ENCODE measurements at regions of chr14 and their contacts with region 1.

Region 1: GRCh38 chr14:21103710-21104447 is 3.0 kb downstream of the TMEM253 start:
- DNase-seq: peak; percentile 98
- ATAC-seq: peak; percentile 88
- H3K4me3 Mint-ChIP-seq: peak overlapping the region; percentile 80
- H3K27ac Mint-ChIP-seq: peak overlapping the region; percentile 90
- H3K4me1 Mint-ChIP-seq: peaks cover 36% of the 10 kb centered on the region
- H3K27me3 Mint-ChIP-seq: no peaks in the 10 kb centered on the region
- CTCF ChIP-seq: peak; percentile 64

Region 2: GRCh38 chr14:21039585-21040369 is 64.1 kb before region 1 on chr14:
- CTCF ChIA-PET with region 1: interaction called, 11 read pairs
- POLR2A ChIA-PET with region 1: interaction called, 3 read pairs
- intact Hi-C with region 1: no loop called
- DNase-seq: peak; percentile 26
- ATAC-seq: peak; percentile 86
- H3K4me3 Mint-ChIP-seq: no peak overlapping the region
- H3K27ac Mint-ChIP-seq: no peak overlapping the region
- H3K4me1 Mint-ChIP-seq: peaks cover 4% of the 10 kb centered on the region
- H3K27me3 Mint-ChIP-seq: peaks cover 3% of the 10 kb centered on the region
- CTCF ChIP-seq: peak; percentile 50

Region 3: DNA sequence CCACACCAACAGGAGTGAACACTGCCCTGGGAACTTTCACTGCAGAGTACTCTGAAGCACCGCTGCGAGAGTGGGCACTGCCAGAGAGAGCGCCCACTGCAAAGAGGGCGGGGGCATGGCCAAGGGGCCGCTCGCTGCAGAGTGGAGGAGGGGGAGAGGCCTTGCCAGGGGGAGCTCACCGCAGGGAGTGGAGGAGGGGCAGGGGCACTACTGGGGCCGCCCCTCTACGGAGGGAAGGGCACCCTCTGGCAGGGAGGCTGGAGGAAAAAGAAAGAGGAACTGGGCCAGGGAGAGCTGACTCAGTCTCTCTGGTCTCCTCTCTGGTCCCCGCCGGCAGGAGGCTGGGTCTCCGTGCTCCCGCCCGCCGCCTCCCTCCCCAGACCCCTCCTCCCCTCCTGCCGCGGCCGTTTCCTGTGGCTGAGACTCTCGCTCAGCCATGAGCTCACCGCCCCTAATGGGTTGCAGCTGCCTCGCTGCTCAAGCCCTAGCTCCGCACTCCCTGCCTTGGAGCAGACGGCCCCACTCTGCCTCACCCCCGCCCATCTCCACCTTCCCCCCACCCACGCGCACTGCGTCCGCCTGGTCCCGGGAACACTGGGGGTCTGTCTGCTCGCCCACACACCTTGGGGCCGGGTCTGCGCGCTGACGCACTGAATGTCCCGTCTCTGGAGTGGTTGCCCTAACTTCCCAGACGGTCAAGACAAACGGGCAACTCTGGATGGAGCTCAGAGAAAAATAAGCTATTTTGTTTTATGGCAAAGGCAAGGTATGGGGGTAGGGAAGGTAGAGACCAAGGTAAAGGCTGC is 32.5 kb before region 1 on chr14:
- CTCF ChIA-PET with region 1: interaction called, 121 read pairs
- POLR2A ChIA-PET with region 1: interaction called, 16 read pairs
- intact Hi-C with region 1: loop called (anchors 2 kb)
- DNase-seq: peak; percentile 76
- ATAC-seq: peak; percentile 76
- H3K4me3 Mint-ChIP-seq: peak overlapping the region; percentile 69
- H3K27ac Mint-ChIP-seq: no peak overlapping the region
- H3K4me1 Mint-ChIP-seq: peaks cover 31% of the 10 kb centered on the region
- H3K27me3 Mint-ChIP-seq: peaks cover 56% of the 10 kb centered on the region
- CTCF ChIP-seq: no peak

Region 4: DNA sequence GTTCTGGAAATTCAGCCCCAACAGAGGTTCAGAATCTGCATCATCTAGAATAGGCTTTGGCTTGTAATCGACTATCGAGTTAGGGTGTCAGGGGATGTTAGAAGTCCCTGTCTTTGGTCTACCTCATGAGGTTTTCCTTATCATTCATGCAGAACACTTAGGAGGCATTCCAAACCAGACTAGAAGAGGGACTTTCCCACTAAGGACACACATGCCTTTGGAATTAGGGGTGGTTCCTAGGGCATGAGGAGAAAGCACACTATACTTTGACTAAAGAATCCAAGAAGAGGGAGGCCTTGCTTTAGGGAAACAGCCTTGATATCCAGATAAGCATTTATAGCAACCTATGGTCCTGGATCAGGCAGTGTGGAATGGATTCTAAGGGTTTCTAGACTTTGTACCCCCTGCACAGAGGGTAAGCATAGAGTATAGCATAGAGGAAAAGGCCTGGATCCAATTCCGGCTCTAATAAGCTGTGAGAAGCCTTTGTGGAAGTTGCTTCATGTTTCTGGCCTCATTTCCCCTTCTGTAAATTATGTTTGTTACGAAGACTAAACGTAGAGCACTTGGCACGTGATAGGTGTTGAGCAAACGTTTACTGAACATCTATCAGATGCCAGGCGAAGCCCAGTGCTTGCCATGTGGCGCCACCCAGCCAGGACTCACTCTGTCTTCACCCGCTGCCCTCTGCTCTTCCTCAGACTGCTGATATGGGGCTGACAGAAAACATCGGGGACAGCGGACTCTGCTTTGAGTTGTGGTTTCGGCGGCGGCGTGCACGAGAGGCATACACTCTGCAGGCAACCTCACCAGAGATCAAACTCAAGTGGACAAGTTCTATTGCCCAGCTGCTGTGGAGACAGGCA is 18.7 kb before region 1 on chr14:
- CTCF ChIA-PET with region 1: interaction called, 105 read pairs
- POLR2A ChIA-PET with region 1: interaction called, 30 read pairs
- intact Hi-C with region 1: no loop called
- DNase-seq: no peak
- ATAC-seq: no peak
- H3K4me3 Mint-ChIP-seq: no peak overlapping the region
- H3K27ac Mint-ChIP-seq: no peak overlapping the region
- H3K4me1 Mint-ChIP-seq: peaks cover 16% of the 10 kb centered on the region
- H3K27me3 Mint-ChIP-seq: no peaks in the 10 kb centered on the region
- CTCF ChIP-seq: no peak

Region 5: GRCh38 chr14:21123429-21123828 is 19.6 kb after region 1 on chr14:
- CTCF ChIA-PET with region 1: interaction called, 10 read pairs
- POLR2A ChIA-PET with region 1: no interaction called
- intact Hi-C with region 1: no loop called
- DNase-seq: no peak
- ATAC-seq: no peak
- H3K4me3 Mint-ChIP-seq: no peak overlapping the region
- H3K27ac Mint-ChIP-seq: no peak overlapping the region
- H3K4me1 Mint-ChIP-seq: no peaks in the 10 kb centered on the region
- H3K27me3 Mint-ChIP-seq: peaks cover 28% of the 10 kb centered on the region
- CTCF ChIP-seq: no peak